ENCODE measurements at regions of chr18 and their contacts with region 1.

Region 1: DNA sequence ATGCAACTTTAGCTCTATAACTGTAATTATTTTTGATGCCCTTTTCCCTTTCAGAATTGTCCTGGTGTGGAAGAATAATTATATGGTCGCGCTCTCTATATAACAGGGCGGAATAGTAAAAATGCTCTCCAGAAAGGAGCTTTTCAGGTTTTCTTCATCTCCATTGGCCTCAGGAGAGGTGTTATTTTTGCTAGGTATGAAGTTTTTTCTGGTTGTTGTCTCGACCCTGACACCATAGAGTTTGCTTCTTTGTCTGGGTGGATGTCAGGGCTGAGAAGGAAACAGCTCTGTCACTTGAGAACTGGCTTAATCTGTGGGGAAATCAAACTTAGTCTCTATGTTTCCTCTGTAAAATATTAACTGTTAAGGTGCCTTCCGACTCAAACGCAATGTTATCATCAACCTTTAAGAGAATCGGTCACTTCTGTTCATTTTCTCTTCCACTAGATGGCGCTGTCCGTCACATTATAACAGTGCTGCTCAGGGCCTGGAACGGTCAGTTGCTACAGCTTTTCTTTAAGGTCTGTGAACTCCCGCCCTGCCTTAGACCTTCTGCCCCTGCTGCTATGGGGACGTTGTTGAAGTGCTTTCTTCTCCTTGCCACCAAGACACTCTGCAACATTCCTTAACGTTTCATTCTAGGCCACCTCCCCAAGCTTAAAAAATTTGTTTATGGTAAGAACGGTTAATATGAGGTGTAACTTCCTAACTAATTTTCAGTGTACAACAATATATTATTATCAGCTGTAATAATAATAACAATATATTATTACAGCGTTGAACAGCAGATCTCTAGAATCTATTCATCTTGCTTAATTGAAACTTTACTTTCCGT is 23.8 kb upstream of the SERPINB12 start:
- DNase-seq: peak; percentile 77
- ATAC-seq: peak; percentile 61
- H3K4me3 ChIP-seq: no peak overlapping the region
- H3K4me3 Mint-ChIP-seq: no peak overlapping the region
- H3K27ac ChIP-seq: no peak overlapping the region
- H3K27ac Mint-ChIP-seq: no peak overlapping the region
- H3K4me1 ChIP-seq: peaks cover 0 to 4% of the 10 kb centered on the region in 2 donors
- H3K4me1 Mint-ChIP-seq: no peaks in the 10 kb centered on the region
- H3K27me3 ChIP-seq: no peaks in the 10 kb centered on the region
- H3K27me3 Mint-ChIP-seq: peaks cover 26% of the 10 kb centered on the region
- CTCF ChIP-seq: peak; percentile 86

Region 2: DNA sequence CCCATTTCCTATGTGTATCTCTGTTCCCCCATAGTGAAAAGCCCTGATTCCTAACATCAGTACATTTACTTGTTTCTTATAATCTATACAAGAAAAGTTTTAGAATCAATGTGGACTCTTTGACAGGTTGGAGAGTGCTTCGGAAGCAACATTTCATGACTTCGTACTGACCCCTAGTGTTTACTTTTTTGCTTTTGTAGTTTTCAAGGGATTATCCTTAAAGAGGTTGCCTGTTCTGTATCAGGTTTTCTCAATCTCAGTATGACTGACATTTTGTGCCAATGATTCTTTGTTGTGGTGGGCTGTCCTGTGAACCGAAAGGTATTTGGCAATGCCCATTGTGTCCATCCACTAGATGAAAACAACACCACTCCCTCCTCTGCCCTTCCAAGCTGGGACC is 325.9 kb after region 1 on chr18:
- CTCF ChIA-PET with region 1: interaction called, 7 read pairs
- POLR2A ChIA-PET with region 1: no interaction called
- intact Hi-C with region 1: loop called (anchors 2 kb)
- DNase-seq: no peak
- ATAC-seq: no peak
- H3K4me3 ChIP-seq: no peak overlapping the region
- H3K4me3 Mint-ChIP-seq: no peak overlapping the region
- H3K27ac ChIP-seq: no peak overlapping the region
- H3K27ac Mint-ChIP-seq: no peak overlapping the region
- H3K4me1 ChIP-seq: no peaks in the 10 kb centered on the region
- H3K4me1 Mint-ChIP-seq: no peaks in the 10 kb centered on the region
- H3K27me3 ChIP-seq: peaks cover 0 to 6% (median 3%) of the 10 kb centered on the region in 4 experiments
- H3K27me3 Mint-ChIP-seq: peaks cover 34% of the 10 kb centered on the region
- CTCF ChIP-seq: no peak

Region 3: GRCh38 chr18:63907664-63908063 is 389.3 kb after region 1 on chr18 and contains the start of gene SERPINB10:
- CTCF ChIA-PET with region 1: no interaction called
- POLR2A ChIA-PET with region 1: no interaction called
- intact Hi-C with region 1: no loop called
- DNase-seq: no peak
- ATAC-seq: no peak
- H3K4me3 ChIP-seq: no peak within 1 kb of the TSS
- H3K4me3 Mint-ChIP-seq: no peak within 1 kb of the TSS
- H3K27ac ChIP-seq: no peak within 1 kb of the TSS
- H3K27ac Mint-ChIP-seq: no peak within 1 kb of the TSS
- H3K4me1 ChIP-seq: no peaks in the 10 kb centered on the region
- H3K4me1 Mint-ChIP-seq: peaks cover 6% of the 10 kb centered on the region
- H3K27me3 ChIP-seq: no peaks in the 10 kb centered on the region
- H3K27me3 Mint-ChIP-seq: peaks cover 6% of the 10 kb centered on the region
- CTCF ChIP-seq: no peak
- total RNA-seq, gene SERPINB10: not detected in 2 replicates

Region 4: GRCh38 chr18:63963615-63964256 is 445.3 kb after region 1 on chr18:
- CTCF ChIA-PET with region 1: interaction called, 13 read pairs
- POLR2A ChIA-PET with region 1: no interaction called
- intact Hi-C with region 1: no loop called
- DNase-seq: peak; percentile 72
- ATAC-seq: peak; percentile 63
- H3K4me3 ChIP-seq: no peak overlapping the region
- H3K4me3 Mint-ChIP-seq: no peak overlapping the region
- H3K27ac ChIP-seq: no peak overlapping the region
- H3K27ac Mint-ChIP-seq: no peak overlapping the region
- H3K4me1 ChIP-seq: no peaks in the 10 kb centered on the region
- H3K4me1 Mint-ChIP-seq: no peaks in the 10 kb centered on the region
- H3K27me3 ChIP-seq: no peaks in the 10 kb centered on the region
- H3K27me3 Mint-ChIP-seq: peaks cover 4% of the 10 kb centered on the region
- CTCF ChIP-seq: peak; percentile 89

Region 5: GRCh38 chr18:63994783-63995399 is 476.5 kb after region 1 on chr18:
- CTCF ChIA-PET with region 1: interaction called, 32 read pairs
- POLR2A ChIA-PET with region 1: no interaction called
- intact Hi-C with region 1: loop called (anchors 1 kb)
- DNase-seq: peak; percentile 56
- ATAC-seq: peak; percentile 58
- H3K4me3 ChIP-seq: no peak overlapping the region
- H3K4me3 Mint-ChIP-seq: no peak overlapping the region
- H3K27ac ChIP-seq: no peak overlapping the region
- H3K27ac Mint-ChIP-seq: no peak overlapping the region
- H3K4me1 ChIP-seq: no peaks in the 10 kb centered on the region
- H3K4me1 Mint-ChIP-seq: no peaks in the 10 kb centered on the region
- H3K27me3 ChIP-seq: no peaks in the 10 kb centered on the region
- H3K27me3 Mint-ChIP-seq: no peaks in the 10 kb centered on the region
- CTCF ChIP-seq: peak; percentile 92

Region 6: GRCh38 chr18:64409511-64409910 is 891.1 kb after region 1 on chr18:
- CTCF ChIA-PET with region 1: interaction called, 7 read pairs
- POLR2A ChIA-PET with region 1: no interaction called
- intact Hi-C with region 1: loop called (anchors 5 kb)
- DNase-seq: peak; percentile 50
- ATAC-seq: no peak
- H3K4me3 ChIP-seq: no peak overlapping the region
- H3K4me3 Mint-ChIP-seq: no peak overlapping the region
- H3K27ac ChIP-seq: no peak overlapping the region
- H3K27ac Mint-ChIP-seq: no peak overlapping the region
- H3K4me1 ChIP-seq: peaks cover 0 to 1% of the 10 kb centered on the region in 2 donors
- H3K4me1 Mint-ChIP-seq: peaks cover 1% of the 10 kb centered on the region
- H3K27me3 ChIP-seq: no peaks in the 10 kb centered on the region
- H3K27me3 Mint-ChIP-seq: no peaks in the 10 kb centered on the region
- CTCF ChIP-seq: peak; percentile 65

Measured in B cell (primary cell).